ENCODE measurements at regions of chr16 and their contacts with region 1.

Region 1: GRCh38 chr16:46830902-46831647 is at the start of gene C16orf87:
- DNase-seq: peak; percentile 93
- H3K4me3 Mint-ChIP-seq: peak within 1 kb of the TSS; percentile 98
- H3K27ac Mint-ChIP-seq: peak within 1 kb of the TSS; percentile 93
- H3K4me1 Mint-ChIP-seq: peaks cover 38% of the 10 kb centered on the region
- H3K27me3 Mint-ChIP-seq: peaks cover 7% of the 10 kb centered on the region
- total RNA-seq, gene C16orf87: 18.0 to 19.6 TPM

Region 2: DNA sequence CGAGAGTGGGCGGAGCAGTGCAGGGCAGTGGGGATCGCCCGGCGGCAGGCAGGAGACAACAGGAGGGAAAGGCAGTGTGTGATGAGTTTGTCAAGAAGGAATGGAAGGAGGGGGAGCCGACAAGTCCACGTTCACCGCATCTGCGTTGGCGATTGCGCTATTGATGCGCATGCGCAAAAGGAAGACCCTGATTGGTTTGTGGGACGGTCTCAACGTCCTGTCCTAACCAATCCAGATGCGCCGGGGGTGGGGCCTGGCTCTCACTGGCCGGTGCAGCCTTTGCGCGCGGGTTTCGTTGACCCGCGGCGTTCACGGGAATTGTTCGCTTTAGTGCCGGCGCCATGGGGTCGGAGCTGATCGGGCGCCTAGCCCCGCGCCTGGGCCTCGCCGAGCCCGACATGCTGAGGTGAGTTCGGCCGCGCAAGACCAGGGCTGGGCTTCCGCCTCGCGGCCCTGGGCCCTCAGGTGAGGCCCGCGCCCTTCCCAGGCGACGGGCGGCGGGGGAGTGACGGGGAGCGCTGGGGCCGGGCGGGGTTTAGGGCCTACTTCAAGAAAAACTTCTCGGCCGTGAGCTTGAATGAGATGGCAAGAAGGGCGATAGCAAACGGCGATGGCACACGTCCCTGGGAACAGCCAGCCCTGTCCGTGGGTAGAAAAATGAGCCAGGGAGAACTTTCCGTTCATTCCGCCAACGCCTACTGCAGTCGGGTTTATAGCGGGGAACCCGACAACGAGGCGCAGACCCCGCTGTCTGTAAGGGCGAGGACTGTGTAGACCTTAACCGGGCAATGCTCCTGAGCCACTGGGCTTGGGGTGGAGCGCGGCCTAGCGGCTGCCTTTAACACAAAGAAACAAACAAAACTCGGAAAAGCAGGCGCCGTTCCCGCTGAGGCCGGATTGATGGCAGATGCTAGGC is 141.5 kb before region 1 on chr16 and contains the start of gene ORC6:
- CTCF ChIA-PET with region 1: interaction called, 5 read pairs
- POLR2A ChIA-PET with region 1: interaction called, 30 read pairs
- DNase-seq: peak; percentile 96
- H3K4me3 Mint-ChIP-seq: no peak within 1 kb of the TSS
- H3K27ac Mint-ChIP-seq: no peak within 1 kb of the TSS
- H3K4me1 Mint-ChIP-seq: peaks cover 27% of the 10 kb centered on the region
- H3K27me3 Mint-ChIP-seq: no peaks in the 10 kb centered on the region
- total RNA-seq, gene ORC6: 35.1 to 35.8 TPM

Region 3: DNA sequence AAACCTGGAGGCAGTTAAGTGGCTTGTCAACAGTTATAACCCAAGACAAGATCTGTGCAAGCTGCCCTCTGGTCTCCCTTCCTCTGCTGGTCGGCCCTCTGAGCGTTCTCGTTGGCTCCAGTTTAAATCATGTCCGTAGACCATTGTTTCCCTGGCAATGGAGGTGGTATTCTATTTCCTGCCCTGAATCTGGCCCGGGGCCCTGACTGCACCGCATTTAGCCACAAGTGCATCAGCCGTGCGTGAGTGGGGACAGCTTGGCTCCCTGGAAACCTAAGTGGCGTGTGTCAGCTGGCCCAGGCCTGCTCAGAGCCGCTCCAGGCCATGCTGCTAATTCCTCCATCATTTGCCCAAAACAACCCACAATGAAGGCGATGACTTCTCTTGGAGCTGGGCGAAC is 67.9 kb before region 1 on chr16:
- CTCF ChIA-PET with region 1: no interaction called
- POLR2A ChIA-PET with region 1: no interaction called
- DNase-seq: no peak
- H3K4me3 Mint-ChIP-seq: no peak overlapping the region
- H3K27ac Mint-ChIP-seq: no peak overlapping the region
- H3K4me1 Mint-ChIP-seq: peaks cover 2% of the 10 kb centered on the region
- H3K27me3 Mint-ChIP-seq: peaks cover 7% of the 10 kb centered on the region

Region 4: GRCh38 chr16:46789499-46790414 is 41.3 kb before region 1 on chr16:
- CTCF ChIA-PET with region 1: interaction called, 3 read pairs
- POLR2A ChIA-PET with region 1: interaction called, 17 read pairs
- DNase-seq: peak; percentile 83
- H3K4me3 Mint-ChIP-seq: peak overlapping the region; percentile 70
- H3K27ac Mint-ChIP-seq: peak overlapping the region; percentile 48
- H3K4me1 Mint-ChIP-seq: peaks cover 28% of the 10 kb centered on the region
- H3K27me3 Mint-ChIP-seq: peaks cover 3% of the 10 kb centered on the region

Region 5: DNA sequence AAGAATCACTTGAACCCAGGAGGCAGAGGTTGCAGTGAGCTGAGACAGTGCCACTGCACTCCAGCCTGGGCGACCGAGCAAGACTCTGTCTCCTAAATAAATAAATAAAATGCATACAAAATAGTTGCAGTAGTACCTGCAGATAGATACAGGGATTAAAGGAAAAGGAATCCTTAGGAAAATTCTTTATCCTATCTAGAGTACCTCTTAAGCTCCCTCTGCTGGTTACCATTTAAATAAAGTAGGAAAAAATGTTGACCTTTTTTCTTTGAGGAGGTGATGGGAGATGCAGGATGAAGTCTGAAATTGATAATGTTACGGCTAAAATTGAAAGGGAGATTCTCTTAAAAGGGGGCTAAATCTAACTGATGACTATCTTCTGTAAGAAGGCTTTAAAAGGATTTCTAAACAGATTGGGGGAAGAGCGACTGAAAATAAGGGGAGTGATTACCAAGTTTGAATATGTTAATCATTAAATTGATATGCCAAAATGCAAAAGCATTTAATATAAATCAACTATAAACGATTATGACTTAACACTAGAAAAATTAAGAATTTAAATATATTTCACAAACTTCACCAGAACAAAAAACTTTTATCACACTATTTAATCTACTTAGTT is 29.5 kb before region 1 on chr16:
- CTCF ChIA-PET with region 1: interaction called, 3 read pairs
- POLR2A ChIA-PET with region 1: interaction called, 10 read pairs
- DNase-seq: no peak
- H3K4me3 Mint-ChIP-seq: no peak overlapping the region
- H3K27ac Mint-ChIP-seq: no peak overlapping the region
- H3K4me1 Mint-ChIP-seq: peaks cover 18% of the 10 kb centered on the region
- H3K27me3 Mint-ChIP-seq: no peaks in the 10 kb centered on the region

Region 6: GRCh38 chr16:46883690-46884512 is 52.8 kb after region 1 on chr16 and contains the start of gene GPT2:
- CTCF ChIA-PET with region 1: interaction called, 3 read pairs
- POLR2A ChIA-PET with region 1: interaction called, 14 read pairs
- DNase-seq: peak; percentile 88
- H3K4me3 Mint-ChIP-seq: peak within 1 kb of the TSS; percentile 78
- H3K27ac Mint-ChIP-seq: peak within 1 kb of the TSS; percentile 73
- H3K4me1 Mint-ChIP-seq: peaks cover 18% of the 10 kb centered on the region
- H3K27me3 Mint-ChIP-seq: peaks cover 18% of the 10 kb centered on the region
- total RNA-seq, gene GPT2: 15.0 to 15.2 TPM

Region 7: DNA sequence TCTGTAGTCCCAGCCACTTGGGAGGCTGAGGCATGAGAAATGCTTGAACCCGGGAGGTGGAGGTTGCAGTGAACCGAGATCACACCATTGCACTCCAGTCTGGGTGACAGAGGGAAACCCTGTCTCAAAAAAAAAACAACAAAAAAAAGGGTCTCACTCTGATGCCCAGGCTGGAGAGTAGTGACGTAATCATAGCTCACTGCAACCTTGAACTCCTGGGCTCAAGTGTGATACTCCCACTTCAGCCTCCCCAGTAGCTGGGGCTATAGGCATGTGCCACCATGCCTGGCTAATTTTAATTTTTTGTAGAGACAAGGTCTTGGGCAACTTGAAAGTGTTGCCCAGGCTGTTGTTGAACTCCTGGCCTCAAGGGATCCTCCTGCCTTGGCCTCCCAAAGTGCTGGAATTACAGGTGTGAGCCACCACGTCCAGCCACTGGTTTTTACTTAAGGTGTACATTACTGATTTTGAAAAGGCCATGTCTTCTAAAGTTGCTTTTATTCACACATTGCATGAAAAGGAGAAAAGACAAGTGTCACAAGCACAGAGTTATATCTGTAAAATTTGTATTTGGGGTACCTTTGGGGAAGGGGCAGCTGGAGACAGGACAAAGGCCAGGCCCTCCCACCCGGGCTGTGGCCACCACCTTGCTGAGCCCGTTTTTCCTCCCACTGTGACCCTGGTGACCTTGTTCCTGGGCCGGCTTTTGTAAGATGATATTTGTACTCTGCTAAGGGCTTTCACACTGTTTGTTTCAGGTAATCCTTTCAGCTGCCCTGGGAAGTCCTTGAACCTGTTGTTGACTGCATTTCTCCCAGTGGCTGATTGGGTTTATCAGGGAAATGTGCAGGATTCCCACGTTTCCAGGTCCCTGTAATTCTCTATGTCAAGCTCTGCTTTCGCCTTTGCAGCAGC is 64.6 kb after region 1 on chr16:
- CTCF ChIA-PET with region 1: no interaction called
- POLR2A ChIA-PET with region 1: no interaction called
- DNase-seq: no peak
- H3K4me3 Mint-ChIP-seq: no peak overlapping the region
- H3K27ac Mint-ChIP-seq: no peak overlapping the region
- H3K4me1 Mint-ChIP-seq: peaks cover 4% of the 10 kb centered on the region
- H3K27me3 Mint-ChIP-seq: no peaks in the 10 kb centered on the region